Heart left ventricle (tissue), 16 donors: ENCODE measurements at regions of chr6 and their contacts with region 1.

Region 1: DNA sequence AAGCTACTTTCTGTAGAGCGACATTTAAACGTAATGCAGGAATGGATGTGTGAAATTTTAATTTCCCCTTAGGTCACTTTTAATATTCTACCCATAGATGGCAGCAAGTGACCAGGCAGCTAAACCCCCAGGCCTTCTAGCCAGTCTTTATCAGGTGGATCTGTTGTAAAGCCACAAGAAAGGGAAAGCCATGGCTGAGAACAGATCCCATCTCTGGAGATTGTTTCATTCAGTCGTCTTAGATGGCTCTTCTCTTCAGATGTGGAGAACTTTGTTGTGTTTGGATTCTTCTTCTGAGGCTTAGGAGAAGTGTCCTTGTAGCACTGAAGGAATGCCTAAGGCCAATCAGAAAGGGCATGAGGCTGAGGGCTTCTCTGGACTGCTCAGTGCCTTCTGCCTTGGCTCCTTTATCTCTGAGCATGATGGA is 15.8 kb upstream of the RNF182 start:
- DNase-seq: peak in 2 of 5 donors; percentile 32 to 35
- ATAC-seq: peak in 3 of 4 donors; percentile 51 to 72 (median 57)
- H3K4me3 ChIP-seq: no peak overlapping the region
- H3K27ac ChIP-seq: no peak overlapping the region
- H3K4me1 ChIP-seq: no peaks in the 10 kb centered on the region
- H3K27me3 ChIP-seq: peaks cover 0 to 27% (median 6%) of the 10 kb centered on the region in 9 donors
- CTCF ChIP-seq: peak; percentile 67 to 94 (median 80)
- POLR2A ChIP-seq: no peak

Region 2: DNA sequence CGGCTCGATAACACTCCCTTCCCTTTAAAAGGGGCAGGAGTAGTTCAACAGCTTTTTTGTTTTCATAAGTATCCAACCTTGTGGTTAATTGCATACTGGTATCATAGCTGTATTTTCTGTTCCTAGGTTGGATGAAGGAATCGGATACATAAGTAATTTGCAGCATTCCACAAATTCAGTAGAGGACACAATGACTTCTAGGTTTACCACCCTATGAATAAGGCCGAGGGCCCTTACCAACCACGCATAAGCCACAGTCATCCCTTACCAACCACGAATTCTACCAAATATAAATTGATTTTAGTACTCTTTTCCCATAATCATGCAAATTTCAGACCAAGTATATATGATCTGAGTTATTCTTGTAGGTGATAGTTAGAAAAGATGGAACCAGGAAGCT is 130.9 kb before region 1 on chr6:
- intact Hi-C with region 1: no loop called
- DNase-seq: no peak
- ATAC-seq: no peak
- H3K4me3 ChIP-seq: no peak overlapping the region
- H3K27ac ChIP-seq: no peak overlapping the region
- H3K4me1 ChIP-seq: no peaks in the 10 kb centered on the region
- H3K27me3 ChIP-seq: no peaks in the 10 kb centered on the region
- CTCF ChIP-seq: no peak
- POLR2A ChIP-seq: no peak

Region 3: GRCh38 chr6:13848522-13849185 is 60.3 kb before region 1 on chr6:
- intact Hi-C with region 1: no loop called
- DNase-seq: no peak
- ATAC-seq: no peak
- H3K4me3 ChIP-seq: no peak overlapping the region
- H3K27ac ChIP-seq: no peak overlapping the region
- H3K4me1 ChIP-seq: peaks cover 0 to 5% (median 0%) of the 10 kb centered on the region in 12 donors
- H3K27me3 ChIP-seq: peaks cover 0 to 7% (median 0%) of the 10 kb centered on the region in 9 donors
- CTCF ChIP-seq: no peak
- POLR2A ChIP-seq: no peak

Region 4: GRCh38 chr6:14046476-14047068 is 137.6 kb after region 1 on chr6:
- intact Hi-C with region 1: loop called in 7 of 10 experiments (anchors 5 kb)
- DNase-seq: peak in 1 of 5 donors; percentile 32
- ATAC-seq: peak in 1 of 4 donors; percentile 54
- H3K4me3 ChIP-seq: no peak overlapping the region
- H3K27ac ChIP-seq: no peak overlapping the region
- H3K4me1 ChIP-seq: no peaks in the 10 kb centered on the region
- H3K27me3 ChIP-seq: peaks cover 0 to 29% (median 4%) of the 10 kb centered on the region in 9 donors
- CTCF ChIP-seq: peak; percentile 40 to 68 (median 54)
- POLR2A ChIP-seq: no peak

Region 5: GRCh38 chr6:14059791-14060444 is 150.9 kb after region 1 on chr6:
- intact Hi-C with region 1: loop called in 4 of 10 experiments (anchors 5 kb)
- DNase-seq: peak; percentile 46 to 81 (median 64)
- ATAC-seq: peak; percentile 64 to 91 (median 82)
- H3K4me3 ChIP-seq: no peak overlapping the region
- H3K27ac ChIP-seq: no peak overlapping the region
- H3K4me1 ChIP-seq: peaks cover 0 to 5% (median 0%) of the 10 kb centered on the region in 12 donors
- H3K27me3 ChIP-seq: peaks cover 0 to 8% (median 0%) of the 10 kb centered on the region in 9 donors
- CTCF ChIP-seq: no peak
- POLR2A ChIP-seq: no peak

Region 6: GRCh38 chr6:14066782-14067406 is 157.9 kb after region 1 on chr6:
- intact Hi-C with region 1: loop called (anchors 1 to 5 kb)
- DNase-seq: no peak
- ATAC-seq: peak; percentile 32 to 84 (median 75)
- H3K4me3 ChIP-seq: no peak overlapping the region
- H3K27ac ChIP-seq: no peak overlapping the region
- H3K4me1 ChIP-seq: peaks cover 0 to 7% (median 0%) of the 10 kb centered on the region in 12 donors
- H3K27me3 ChIP-seq: peaks cover 0 to 4% (median 0%) of the 10 kb centered on the region in 9 donors
- CTCF ChIP-seq: peak; percentile 49 to 78 (median 66)
- POLR2A ChIP-seq: no peak

Region 7: GRCh38 chr6:14144678-14145113 is 235.7 kb after region 1 on chr6:
- intact Hi-C with region 1: loop called (anchors 2 to 5 kb)
- DNase-seq: peak; percentile 57 to 78 (median 65)
- ATAC-seq: peak in 3 of 4 donors; percentile 81 to 84 (median 83)
- H3K4me3 ChIP-seq: no peak overlapping the region
- H3K27ac ChIP-seq: no peak overlapping the region
- H3K4me1 ChIP-seq: peaks cover 0 to 9% (median 0%) of the 10 kb centered on the region in 12 donors
- H3K27me3 ChIP-seq: no peaks in the 10 kb centered on the region
- CTCF ChIP-seq: peak; percentile 82 to 98 (median 91)
- POLR2A ChIP-seq: no peak